BJ (cell line): ENCODE measurements at regions of chr17 and their contacts with region 1.

Region 1: DNA sequence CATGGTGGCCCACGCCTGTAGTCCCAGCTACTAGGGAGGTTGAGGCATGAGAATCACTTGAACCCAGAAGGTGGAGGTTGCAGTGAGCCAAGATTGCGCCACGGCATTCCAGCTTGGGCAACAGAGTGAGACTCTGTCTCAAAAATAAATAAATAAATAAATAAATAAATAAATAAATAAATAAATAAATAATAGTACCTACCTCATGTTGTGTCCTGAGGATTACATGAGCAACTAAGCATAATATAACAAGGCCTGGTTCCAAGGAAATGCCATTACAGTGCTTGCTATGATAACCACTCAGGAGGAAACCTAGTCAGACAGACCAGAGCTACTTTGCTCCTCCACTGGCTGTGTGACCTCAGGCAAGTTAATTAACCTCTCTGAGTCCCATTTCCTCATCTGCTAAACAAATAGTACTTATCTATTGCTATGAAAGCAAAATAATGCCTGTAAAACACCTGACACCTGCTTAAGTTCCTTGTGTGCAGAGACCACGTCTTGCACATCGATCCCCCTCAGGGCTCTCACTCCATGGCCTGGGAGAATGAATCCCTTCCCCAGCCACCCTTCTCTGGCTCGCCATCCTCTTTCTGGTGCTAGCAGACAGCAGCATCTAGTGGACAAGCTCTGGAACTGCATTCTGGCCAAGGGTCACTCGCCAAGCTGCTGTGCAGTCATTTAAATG is 7.5 kb downstream of the EPOP start:
- DNase-seq: no peak
- H3K4me3 ChIP-seq: no peak overlapping the region
- H3K27me3 ChIP-seq: peaks cover 33% of the 10 kb centered on the region
- CTCF ChIP-seq: peak; percentile 100

Region 2: DNA sequence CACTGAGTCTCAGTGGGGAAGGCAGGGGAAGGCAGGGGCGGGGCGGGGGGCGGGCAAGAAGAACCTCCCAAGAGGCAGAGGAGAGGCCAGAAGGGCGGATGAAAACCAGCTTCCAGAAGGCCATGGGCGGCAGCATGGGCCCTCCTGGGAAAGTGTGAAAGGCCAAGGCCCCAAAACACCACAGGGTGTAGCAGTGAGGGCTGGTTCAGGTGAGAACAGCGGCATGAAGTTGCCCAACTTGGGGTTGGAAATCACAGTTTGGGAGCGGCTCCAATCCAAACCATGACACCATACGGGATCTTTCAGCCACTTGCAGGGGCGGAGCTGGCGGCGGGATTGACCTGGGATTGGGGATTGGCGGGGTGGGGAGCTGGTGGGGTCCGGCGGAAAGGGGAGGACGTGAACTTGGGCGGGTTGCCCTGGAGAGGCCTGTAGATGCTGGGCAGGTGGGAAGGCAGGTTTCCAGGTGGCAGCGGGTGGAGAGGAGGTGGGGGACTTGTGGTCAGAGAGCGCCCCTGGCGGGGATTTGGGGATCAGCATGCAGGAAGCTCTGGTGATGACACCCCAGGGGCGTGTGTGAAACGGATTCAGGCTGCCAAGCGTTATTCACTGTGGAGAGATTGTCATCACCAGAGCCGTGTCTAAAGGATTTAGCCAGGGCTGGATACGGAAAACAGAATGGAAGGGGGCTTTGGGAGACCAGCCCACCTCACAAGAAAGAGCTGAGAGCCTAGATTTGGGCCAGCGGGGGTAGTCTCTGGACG is 158.1 kb before region 1 on chr17:
- CTCF ChIA-PET with region 1: interaction called, 39 read pairs
- POLR2A ChIA-PET with region 1: no interaction called
- DNase-seq: peak; percentile 56
- H3K4me3 ChIP-seq: no peak overlapping the region
- H3K27me3 ChIP-seq: no peaks in the 10 kb centered on the region
- CTCF ChIP-seq: peak; percentile 90

Region 3: GRCh38 chr17:38557836-38558727 is 109.2 kb before region 1 on chr17:
- CTCF ChIA-PET with region 1: interaction called, 51 read pairs
- POLR2A ChIA-PET with region 1: no interaction called
- DNase-seq: peak; percentile 53
- H3K4me3 ChIP-seq: peak overlapping the region; percentile 35
- H3K27me3 ChIP-seq: peaks cover 4% of the 10 kb centered on the region
- CTCF ChIP-seq: peak; percentile 98

Region 4: GRCh38 chr17:38632334-38632733 is 34.9 kb before region 1 on chr17:
- CTCF ChIA-PET with region 1: no interaction called
- POLR2A ChIA-PET with region 1: no interaction called
- DNase-seq: no peak
- H3K4me3 ChIP-seq: no peak overlapping the region
- H3K27me3 ChIP-seq: no peaks in the 10 kb centered on the region
- CTCF ChIP-seq: no peak

Region 5: GRCh38 chr17:38656959-38657823 is 10.1 kb before region 1 on chr17:
- CTCF ChIA-PET with region 1: interaction called, 26 read pairs
- POLR2A ChIA-PET with region 1: no interaction called
- DNase-seq: no peak
- H3K4me3 ChIP-seq: no peak overlapping the region
- H3K27me3 ChIP-seq: peaks cover 25% of the 10 kb centered on the region
- CTCF ChIP-seq: no peak